ENCODE measurements at regions of chr13 and their contacts with region 1.

Region 1: GRCh38 chr13:87259551-87259954 is 411.6 kb upstream of the SLITRK5 start:
- DNase-seq: no peak
- ATAC-seq: peak; percentile 72; the same call in 1 of the 2 replicates
- H3K4me3 ChIP-seq: no peak overlapping the region
- H3K27ac ChIP-seq: no peak overlapping the region; the same call in 1 of the 2 replicates
- H3K4me1 ChIP-seq: no peaks in the 10 kb centered on the region
- H3K27me3 ChIP-seq: no peaks in the 10 kb centered on the region
- CTCF ChIP-seq: peak; percentile 63

Region 2: GRCh38 chr13:86882835-86883234 is 376.7 kb before region 1 on chr13:
- CTCF ChIA-PET with region 1: no interaction called
- POLR2A ChIA-PET with region 1: no interaction called
- in situ Hi-C with region 1: no loop called
- intact Hi-C with region 1: no loop called
- DNase-seq: no peak
- ATAC-seq: no peak
- H3K4me3 ChIP-seq: no peak overlapping the region
- H3K27ac ChIP-seq: no peak overlapping the region
- H3K4me1 ChIP-seq: no peaks in the 10 kb centered on the region
- H3K27me3 ChIP-seq: no peaks in the 10 kb centered on the region
- CTCF ChIP-seq: no peak

Region 3: DNA sequence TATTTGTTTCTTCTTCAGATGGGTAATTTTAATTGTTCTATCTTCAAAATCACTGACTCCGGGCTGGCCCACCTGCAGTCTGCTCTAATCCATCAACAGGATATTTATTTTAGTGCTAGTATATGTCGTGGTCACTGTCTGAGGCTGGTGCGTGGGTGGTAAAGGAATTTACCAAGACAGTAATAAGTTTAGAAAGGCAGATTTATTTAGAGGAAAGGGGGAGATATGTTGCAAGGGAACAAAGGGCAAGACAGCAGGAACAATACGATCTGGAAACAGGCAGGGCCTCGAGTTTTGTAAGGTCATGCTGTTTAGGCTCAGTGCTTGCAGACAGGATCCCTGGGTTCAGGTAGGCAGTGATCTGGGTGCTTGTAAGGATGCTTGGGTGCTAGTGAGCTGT is 336.7 kb before region 1 on chr13:
- CTCF ChIA-PET with region 1: interaction called, 12 read pairs
- POLR2A ChIA-PET with region 1: no interaction called
- in situ Hi-C with region 1: no loop called
- intact Hi-C with region 1: no loop called
- DNase-seq: no peak
- ATAC-seq: no peak
- H3K4me3 ChIP-seq: no peak overlapping the region
- H3K27ac ChIP-seq: no peak overlapping the region
- H3K4me1 ChIP-seq: no peaks in the 10 kb centered on the region
- H3K27me3 ChIP-seq: no peaks in the 10 kb centered on the region
- CTCF ChIP-seq: no peak

Measured in Panc1 (cell line).